ENCODE measurements at regions of chr3 and their contacts with region 1.

Region 1: GRCh38 chr3:120311863-120312794 is 27.1 kb upstream of the GPR156 start:
- DNase-seq: no peak
- ATAC-seq: no peak
- H3K4me3 ChIP-seq: no peak overlapping the region
- H3K27ac ChIP-seq: no peak overlapping the region
- H3K4me1 ChIP-seq: no peaks in the 10 kb centered on the region
- H3K27me3 ChIP-seq: no peaks in the 10 kb centered on the region
- CTCF ChIP-seq: no peak
- POLR2A ChIP-seq: no peak
- RAD21 ChIP-seq: no peak

Region 2: DNA sequence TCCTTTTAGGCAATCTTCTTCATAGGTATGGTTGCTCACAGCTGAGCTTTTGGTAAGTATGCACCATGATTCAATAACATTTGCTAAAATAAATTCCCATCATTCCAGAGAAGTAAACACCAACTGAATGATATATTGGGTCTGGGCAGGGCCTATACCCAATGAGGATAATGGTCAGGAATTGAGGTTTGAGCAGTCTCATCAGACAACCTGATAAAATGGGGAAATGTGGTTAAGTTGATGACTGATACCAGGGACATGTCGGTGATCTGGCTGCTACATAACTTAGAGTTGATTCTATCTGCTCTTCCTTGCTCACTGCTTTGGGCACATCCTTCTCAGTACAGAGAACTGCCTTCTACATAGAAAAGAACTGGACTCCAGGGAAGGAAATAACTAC is 120.0 kb before region 1 on chr3:
- CTCF ChIA-PET with region 1: no interaction called
- POLR2A ChIA-PET with region 1: no interaction called
- dilution Hi-C with region 1: no loop called
- in situ Hi-C with region 1: no loop called
- intact Hi-C with region 1: no loop called
- DNase-seq: peak; percentile 61
- ATAC-seq: peak; percentile 84
- H3K4me3 ChIP-seq: no peak overlapping the region
- H3K27ac ChIP-seq: no peak overlapping the region
- H3K4me1 ChIP-seq: peaks cover 8% of the 10 kb centered on the region; the same call in 1 of the 2 replicates
- H3K27me3 ChIP-seq: no peaks in the 10 kb centered on the region
- CTCF ChIP-seq: no peak
- POLR2A ChIP-seq: no peak
- RAD21 ChIP-seq: no peak

Region 3: GRCh38 chr3:120324192-120324591 is 12.1 kb after region 1 on chr3:
- CTCF ChIA-PET with region 1: interaction called, 10 read pairs
- POLR2A ChIA-PET with region 1: no interaction called
- dilution Hi-C with region 1: no loop called
- in situ Hi-C with region 1: no loop called
- intact Hi-C with region 1: no loop called
- DNase-seq: peak; percentile 39
- ATAC-seq: 0 out of 2 replicates have a peak, but pooled peaks have one; percentile 29
- H3K4me3 ChIP-seq: no peak overlapping the region
- H3K27ac ChIP-seq: no peak overlapping the region
- H3K4me1 ChIP-seq: no peaks in the 10 kb centered on the region
- H3K27me3 ChIP-seq: no peaks in the 10 kb centered on the region
- CTCF ChIP-seq: no peak
- POLR2A ChIP-seq: no peak
- RAD21 ChIP-seq: no peak

Region 4: DNA sequence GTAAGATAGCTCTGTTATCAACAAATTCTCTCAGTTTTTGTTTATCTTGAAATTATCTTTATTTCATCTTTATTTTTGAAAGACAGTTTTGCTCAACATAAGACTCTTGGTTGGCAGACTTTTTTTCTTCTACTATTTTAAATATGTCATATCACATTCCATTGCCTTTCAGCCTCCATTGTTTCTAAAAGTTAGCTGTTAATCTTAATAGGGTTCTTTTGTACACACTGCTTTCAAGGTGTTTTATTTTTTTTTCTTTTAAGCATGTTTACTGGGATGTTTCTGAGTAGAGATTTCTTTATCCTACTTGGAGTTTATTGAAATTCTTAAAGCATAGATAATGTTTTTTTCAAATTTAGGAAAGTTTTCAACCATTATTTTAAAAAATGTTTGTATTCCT is 890.4 kb after region 1 on chr3:
- CTCF ChIA-PET with region 1: no interaction called
- POLR2A ChIA-PET with region 1: no interaction called
- dilution Hi-C with region 1: no loop called
- in situ Hi-C with region 1: no loop called
- intact Hi-C with region 1: no loop called
- DNase-seq: no peak
- ATAC-seq: no peak
- H3K4me3 ChIP-seq: no peak overlapping the region
- H3K27ac ChIP-seq: no peak overlapping the region
- H3K4me1 ChIP-seq: no peaks in the 10 kb centered on the region
- H3K27me3 ChIP-seq: no peaks in the 10 kb centered on the region
- CTCF ChIP-seq: no peak
- POLR2A ChIP-seq: no peak
- RAD21 ChIP-seq: no peak